ENCODE measurements at regions of chrX and their contacts with region 1.

Region 1: DNA sequence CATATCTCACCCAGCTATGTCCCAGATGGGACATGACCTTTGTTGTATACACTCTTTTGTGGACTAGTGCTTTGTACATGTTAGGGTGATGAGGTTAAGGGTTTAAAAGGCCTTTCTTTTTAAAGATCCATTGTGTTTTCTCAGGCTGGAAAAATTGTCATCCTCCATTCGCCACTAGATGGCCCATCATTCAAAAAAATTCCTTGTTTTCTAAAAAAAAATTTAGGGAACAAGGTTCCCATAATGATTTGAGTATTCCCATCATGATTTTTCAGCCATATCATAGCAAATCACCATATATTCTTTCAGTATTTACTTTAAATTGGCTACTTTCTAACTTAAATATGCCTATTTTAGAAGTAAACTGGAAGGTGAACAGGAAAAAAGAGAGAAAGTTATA is 91.9 kb upstream of the TMEM164 start:
- DNase-seq: peak; percentile 35
- ATAC-seq: no peak
- H3K4me3 ChIP-seq: no peak overlapping the region
- H3K27ac ChIP-seq: no peak overlapping the region
- H3K4me1 ChIP-seq: no peaks in the 10 kb centered on the region
- H3K27me3 ChIP-seq: no peaks in the 10 kb centered on the region
- CTCF ChIP-seq: peak; percentile 75

Region 2: DNA sequence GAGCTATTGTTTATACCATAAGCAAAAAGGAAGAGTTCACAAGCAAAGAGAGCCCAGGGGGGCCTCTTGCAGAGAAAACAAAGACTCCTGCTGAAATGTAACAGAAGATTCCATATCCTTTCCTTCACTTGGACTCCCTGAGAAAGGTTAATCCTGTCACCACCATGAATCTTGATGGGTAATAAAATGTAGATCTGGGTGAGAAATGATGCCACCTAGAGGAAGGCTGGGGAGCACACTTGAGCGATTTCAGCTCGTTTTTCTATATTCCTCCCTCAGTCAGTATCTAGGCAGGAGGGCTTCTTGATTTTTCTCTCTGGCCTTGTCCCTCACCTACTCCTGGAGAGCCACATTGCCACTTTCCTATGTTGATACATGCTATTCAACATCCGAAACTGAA is 275.9 kb before region 1 on chrX:
- CTCF ChIA-PET with region 1: no interaction called
- POLR2A ChIA-PET with region 1: no interaction called
- intact Hi-C with region 1: no loop called
- DNase-seq: peak; percentile 39
- ATAC-seq: peak; percentile 42; the same call in 1 of the 2 replicates
- H3K4me3 ChIP-seq: no peak overlapping the region
- H3K27ac ChIP-seq: no peak overlapping the region
- H3K4me1 ChIP-seq: no peaks in the 10 kb centered on the region
- H3K27me3 ChIP-seq: no peaks in the 10 kb centered on the region
- CTCF ChIP-seq: peak; percentile 66

Region 3: GRCh38 chrX:109830704-109831206 is 80.3 kb before region 1 on chrX:
- CTCF ChIA-PET with region 1: no interaction called
- POLR2A ChIA-PET with region 1: no interaction called
- intact Hi-C with region 1: no loop called
- DNase-seq: peak; percentile 46
- ATAC-seq: peak; percentile 66
- H3K4me3 ChIP-seq: no peak overlapping the region
- H3K27ac ChIP-seq: 0 out of 2 replicates have a peak overlapping the region, but pooled peaks have one; percentile 9
- H3K4me1 ChIP-seq: peaks cover 18% of the 10 kb centered on the region
- H3K27me3 ChIP-seq: no peaks in the 10 kb centered on the region
- CTCF ChIP-seq: no peak

Region 4: DNA sequence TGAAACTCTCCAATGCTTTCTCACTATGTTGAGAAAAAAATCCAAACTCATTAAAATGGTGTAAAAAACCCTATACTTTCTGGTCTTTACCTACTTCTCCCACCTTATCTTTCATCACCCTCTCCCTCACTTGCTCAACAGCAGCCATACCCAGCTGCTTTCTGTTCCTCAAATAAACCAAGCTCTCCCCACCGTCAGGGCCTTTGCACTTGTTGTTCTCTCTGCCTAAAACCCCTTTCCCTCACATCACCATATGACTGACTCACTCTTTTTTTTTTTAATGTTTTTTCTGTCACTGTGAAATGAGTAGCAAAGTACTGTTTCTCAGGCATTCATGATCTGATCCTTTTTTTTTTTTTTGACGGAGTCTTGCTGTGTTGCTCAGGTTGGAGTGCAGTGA is 30.4 kb before region 1 on chrX:
- CTCF ChIA-PET with region 1: no interaction called
- POLR2A ChIA-PET with region 1: no interaction called
- intact Hi-C with region 1: no loop called
- DNase-seq: no peak
- ATAC-seq: no peak
- H3K4me3 ChIP-seq: no peak overlapping the region
- H3K27ac ChIP-seq: no peak overlapping the region
- H3K4me1 ChIP-seq: no peaks in the 10 kb centered on the region
- H3K27me3 ChIP-seq: no peaks in the 10 kb centered on the region
- CTCF ChIP-seq: no peak

Region 5: DNA sequence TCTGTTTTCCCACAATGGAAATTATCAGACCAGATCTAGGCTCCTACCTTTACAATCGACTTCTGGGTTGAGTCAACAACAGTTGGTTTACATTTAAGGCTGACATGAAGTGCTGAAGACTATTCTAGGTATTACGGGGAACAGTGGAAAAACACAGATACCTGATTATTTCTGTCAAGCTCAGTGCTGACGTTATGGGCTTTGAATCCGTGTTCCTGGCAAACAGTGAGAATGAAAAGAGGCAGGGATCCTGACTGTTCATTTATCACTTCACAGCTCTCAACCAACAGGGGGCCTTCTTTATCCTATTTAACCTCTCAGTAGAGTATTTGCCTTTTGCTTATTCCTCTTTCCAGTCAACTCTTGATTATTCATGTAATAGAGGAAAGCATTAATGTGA is 135.0 kb after region 1 on chrX:
- CTCF ChIA-PET with region 1: no interaction called
- POLR2A ChIA-PET with region 1: no interaction called
- intact Hi-C with region 1: no loop called
- DNase-seq: peak; percentile 7
- ATAC-seq: no peak
- H3K4me3 ChIP-seq: no peak overlapping the region
- H3K27ac ChIP-seq: no peak overlapping the region
- H3K4me1 ChIP-seq: peaks cover 4% of the 10 kb centered on the region; the same call in 1 of the 2 replicates
- H3K27me3 ChIP-seq: no peaks in the 10 kb centered on the region
- CTCF ChIP-seq: peak; percentile 40; the same call in 1 of the 2 replicates

Region 6: GRCh38 chrX:110125446-110126162 is 214.6 kb after region 1 on chrX:
- CTCF ChIA-PET with region 1: no interaction called
- POLR2A ChIA-PET with region 1: no interaction called
- intact Hi-C with region 1: loop called (anchors 1 kb)
- DNase-seq: peak; percentile 24
- ATAC-seq: peak; percentile 53
- H3K4me3 ChIP-seq: no peak overlapping the region
- H3K27ac ChIP-seq: no peak overlapping the region
- H3K4me1 ChIP-seq: no peaks in the 10 kb centered on the region
- H3K27me3 ChIP-seq: no peaks in the 10 kb centered on the region
- CTCF ChIP-seq: peak; percentile 49

Region 7: DNA sequence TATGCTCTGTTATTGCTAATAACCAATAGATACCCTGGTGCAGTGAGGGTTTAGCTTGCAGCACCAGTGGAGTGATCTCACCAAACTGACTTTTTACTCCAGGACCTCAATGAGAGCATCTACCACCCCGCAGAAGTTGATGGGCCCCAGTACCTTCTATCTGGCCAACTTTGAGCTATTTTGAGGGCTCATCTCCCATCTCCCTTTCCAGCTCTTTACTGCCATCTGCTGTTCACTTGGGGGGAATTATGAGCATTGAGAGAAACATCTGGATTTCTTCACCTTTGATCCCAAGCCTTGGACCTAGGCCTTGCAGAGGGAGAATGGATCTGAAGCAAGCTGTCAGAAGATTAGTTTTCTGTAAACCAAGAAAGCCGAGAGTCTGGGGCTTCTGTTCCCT is 235.5 kb after region 1 on chrX:
- CTCF ChIA-PET with region 1: interaction called, 6 read pairs
- POLR2A ChIA-PET with region 1: no interaction called
- intact Hi-C with region 1: loop called (anchors 1 kb)
- DNase-seq: peak; percentile 72
- ATAC-seq: peak; percentile 82
- H3K4me3 ChIP-seq: no peak overlapping the region
- H3K27ac ChIP-seq: no peak overlapping the region
- H3K4me1 ChIP-seq: no peaks in the 10 kb centered on the region
- H3K27me3 ChIP-seq: no peaks in the 10 kb centered on the region
- CTCF ChIP-seq: peak; percentile 74

Region 8: DNA sequence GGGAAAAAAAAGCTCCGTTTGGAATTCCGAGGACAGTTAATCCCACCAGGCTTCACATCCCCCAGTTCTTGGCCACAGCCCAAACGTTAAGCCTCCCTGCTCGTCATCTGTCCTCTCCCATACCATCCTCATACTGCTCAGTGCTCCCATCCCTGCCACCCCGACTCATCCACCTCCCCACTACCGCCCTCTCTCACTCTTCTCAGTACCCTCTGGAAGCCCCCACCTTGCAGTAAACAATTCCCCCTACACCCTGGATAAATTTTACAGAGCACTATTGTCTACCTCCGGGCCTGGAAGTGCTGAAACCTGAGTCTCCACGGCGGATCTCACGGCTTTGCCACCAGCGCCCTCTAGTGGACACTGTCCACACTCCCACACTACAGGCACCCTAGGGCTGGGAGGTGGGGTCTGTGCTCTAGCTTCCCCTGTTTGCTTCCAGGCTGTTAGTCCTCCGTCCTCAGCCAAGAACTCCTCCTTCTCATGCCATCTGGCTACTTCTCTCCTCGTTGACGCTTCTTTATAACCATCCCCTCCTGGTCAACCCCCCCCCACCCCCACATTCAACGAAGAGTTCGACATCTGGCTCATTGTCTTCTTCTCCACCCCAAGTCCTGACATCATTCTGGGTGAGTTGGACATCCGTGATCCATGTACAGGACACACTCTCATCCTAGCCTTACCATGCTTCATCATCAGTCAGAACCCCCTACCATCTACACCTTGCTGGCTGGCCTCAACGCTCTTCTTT is 502.1 kb after region 1 on chrX:
- CTCF ChIA-PET with region 1: no interaction called
- POLR2A ChIA-PET with region 1: no interaction called
- intact Hi-C with region 1: loop called (anchors 10 kb)
- DNase-seq: peak; percentile 82
- ATAC-seq: peak; percentile 64
- H3K4me3 ChIP-seq: peak overlapping the region; percentile 28
- H3K27ac ChIP-seq: no peak overlapping the region
- H3K4me1 ChIP-seq: peaks cover 65% of the 10 kb centered on the region
- H3K27me3 ChIP-seq: no peaks in the 10 kb centered on the region
- CTCF ChIP-seq: peak; percentile 89

Measured in PC-3 (cell line).